ENCODE measurements at regions of chr15 and their contacts with region 1.

Region 1: DNA sequence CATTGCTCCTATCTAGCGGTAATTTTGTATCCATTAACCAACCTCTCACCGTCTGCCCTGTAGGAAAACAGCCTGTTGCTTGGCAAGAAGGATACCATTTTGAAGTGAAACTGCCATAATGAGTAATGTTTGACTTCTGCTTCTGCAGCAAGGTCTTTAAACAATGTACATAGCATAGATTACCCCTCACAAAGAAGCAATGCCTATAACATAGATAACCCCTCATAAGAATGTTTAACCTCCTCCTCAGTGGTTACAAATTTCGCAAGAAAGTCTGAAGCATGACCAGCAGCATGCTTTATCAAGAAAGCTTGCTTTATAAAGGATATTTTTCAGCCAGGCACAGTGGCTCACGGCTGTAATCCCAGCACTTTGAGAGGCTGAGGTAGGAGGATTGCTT is 61.2 kb upstream of the MFGE8 start:
- DNase-seq: no peak
- H3K4me3 ChIP-seq: no peak overlapping the region
- H3K27ac ChIP-seq: no peak overlapping the region
- H3K4me1 ChIP-seq: no peaks in the 10 kb centered on the region
- H3K27me3 ChIP-seq: peaks cover 4% of the 10 kb centered on the region; the same call in 1 of the 2 replicates
- CTCF ChIP-seq: no peak

Region 2: DNA sequence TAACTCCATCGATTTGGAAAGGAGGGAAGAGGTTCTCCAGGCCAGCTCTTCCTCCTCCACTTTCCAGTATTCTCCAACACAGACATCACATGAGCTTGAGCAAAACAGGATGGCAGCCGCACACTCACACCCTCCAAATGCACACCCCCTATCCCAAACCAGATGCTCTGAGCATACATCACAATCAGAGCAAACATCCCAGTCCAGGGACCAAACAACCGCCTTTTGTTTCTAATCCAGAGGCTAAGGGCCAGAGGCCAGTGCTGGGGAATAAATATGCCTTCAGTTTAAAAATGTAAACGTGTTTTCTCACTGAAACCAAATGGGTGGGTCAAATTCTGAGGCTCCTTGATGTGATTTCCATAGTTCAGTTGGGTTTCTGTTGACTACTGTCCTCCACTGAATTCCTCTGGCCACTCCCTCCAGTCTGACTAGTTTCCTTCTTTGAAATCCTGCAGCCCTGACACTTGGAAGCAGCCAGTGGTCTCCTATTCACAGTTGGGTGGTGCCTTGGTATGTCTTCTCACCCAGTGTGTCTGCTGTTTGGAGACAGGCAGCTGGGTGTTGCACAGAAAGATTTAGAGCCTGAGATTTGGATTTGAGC is 42.0 kb before region 1 on chr15:
- CTCF ChIA-PET with region 1: no interaction called
- POLR2A ChIA-PET with region 1: no interaction called
- intact Hi-C with region 1: loop called (anchors 5 kb)
- DNase-seq: no peak
- H3K4me3 ChIP-seq: no peak overlapping the region
- H3K27ac ChIP-seq: no peak overlapping the region
- H3K4me1 ChIP-seq: no peaks in the 10 kb centered on the region
- H3K27me3 ChIP-seq: peaks cover 15% of the 10 kb centered on the region; the same call in 1 of the 2 replicates
- CTCF ChIP-seq: no peak

Region 3: DNA sequence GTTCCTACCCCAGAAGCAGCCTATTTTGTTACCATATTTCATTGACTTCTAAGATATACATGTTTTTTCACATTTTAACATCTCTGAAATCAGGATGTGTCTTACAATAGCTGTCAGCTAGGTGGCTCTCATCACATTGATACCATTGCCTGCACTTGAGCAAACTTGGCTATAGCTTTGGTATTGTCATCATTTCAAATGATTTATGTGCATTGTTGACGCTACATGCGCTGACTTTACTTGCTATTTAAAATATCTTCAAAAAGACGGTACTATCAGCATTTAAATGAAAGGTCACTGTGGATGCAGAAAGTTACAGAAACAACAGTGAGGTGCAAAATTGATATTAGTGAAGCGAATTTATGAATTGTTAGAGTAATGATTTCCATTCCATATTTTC is 59.9 kb after region 1 on chr15:
- CTCF ChIA-PET with region 1: no interaction called
- POLR2A ChIA-PET with region 1: no interaction called
- intact Hi-C with region 1: no loop called
- DNase-seq: no peak
- H3K4me3 ChIP-seq: no peak overlapping the region
- H3K27ac ChIP-seq: no peak overlapping the region
- H3K4me1 ChIP-seq: no peaks in the 10 kb centered on the region
- H3K27me3 ChIP-seq: peaks cover 7% of the 10 kb centered on the region; the same call in 1 of the 2 replicates
- CTCF ChIP-seq: peak; percentile 59

Measured in PC-9 (cell line).